ENCODE measurements at regions of chr17 and their contacts with region 1.

Region 1: DNA sequence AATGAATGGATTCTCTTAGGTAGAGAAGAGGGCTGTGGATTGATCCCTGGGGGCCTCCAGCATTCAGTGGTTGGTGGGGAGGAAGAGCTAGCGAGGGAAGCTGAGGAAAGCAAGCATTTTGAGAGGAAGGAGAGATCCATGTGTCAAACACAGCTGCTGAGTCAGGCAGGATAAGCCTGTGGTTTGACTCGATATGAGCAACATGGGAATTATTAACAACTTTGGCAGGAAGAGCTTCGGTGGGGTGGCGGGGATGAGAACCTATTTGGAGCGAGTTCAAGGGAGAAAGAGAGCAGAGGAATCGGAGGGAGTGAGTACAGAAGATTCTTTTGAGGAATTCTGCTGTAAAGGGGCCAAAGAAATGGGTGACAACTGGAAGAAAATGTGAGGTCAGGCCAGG is 59.5 kb upstream of the CDC42EP4 start:
- DNase-seq: no peak

Region 2: DNA sequence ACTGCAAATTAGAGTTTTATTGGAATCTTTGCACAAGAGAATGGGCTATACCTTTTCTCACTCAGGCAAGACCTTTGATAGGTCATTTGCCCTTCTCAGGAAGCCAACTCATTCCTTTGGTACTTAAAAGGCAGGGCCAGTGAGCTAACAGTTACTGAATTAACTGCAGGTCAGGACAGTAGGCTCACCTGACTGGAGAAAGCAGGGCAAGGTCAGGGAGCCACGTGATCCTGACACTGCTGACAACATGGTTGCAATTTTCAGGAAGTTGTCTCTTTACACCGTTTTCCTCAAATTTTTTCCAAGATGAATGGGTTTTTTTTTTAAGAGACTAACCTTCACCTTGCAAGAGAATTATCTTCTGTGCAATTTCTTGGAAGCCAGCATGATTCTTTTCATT is 130.7 kb before region 1 on chr17:
- intact Hi-C with region 1: no loop called
- DNase-seq: no peak

Region 3: DNA sequence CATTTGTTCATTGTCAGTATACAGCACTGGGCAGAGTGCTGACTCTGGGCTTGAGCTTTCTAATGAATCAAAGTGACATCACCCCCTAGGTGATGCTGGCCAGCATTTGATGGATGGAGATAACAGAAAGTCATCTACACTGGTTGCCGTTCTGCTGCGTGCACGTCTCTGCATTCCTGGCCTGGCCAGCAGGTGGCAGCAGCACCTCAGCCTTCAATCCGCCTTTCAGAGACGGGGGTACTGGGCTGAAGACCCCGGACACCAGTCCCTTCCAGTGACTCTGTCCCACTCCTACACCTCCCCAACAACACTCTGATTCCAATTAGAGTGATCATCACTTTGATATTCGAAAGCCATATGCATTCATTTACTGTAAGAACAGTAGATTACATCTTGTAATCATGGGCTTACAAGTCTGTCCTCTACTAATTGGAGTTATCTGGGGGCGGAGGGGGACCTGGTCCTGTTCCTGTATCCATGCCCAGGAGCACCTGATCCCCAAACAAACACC is 115.6 kb before region 1 on chr17:
- intact Hi-C with region 1: loop called (anchors 1 kb)
- DNase-seq: no peak

Region 4: DNA sequence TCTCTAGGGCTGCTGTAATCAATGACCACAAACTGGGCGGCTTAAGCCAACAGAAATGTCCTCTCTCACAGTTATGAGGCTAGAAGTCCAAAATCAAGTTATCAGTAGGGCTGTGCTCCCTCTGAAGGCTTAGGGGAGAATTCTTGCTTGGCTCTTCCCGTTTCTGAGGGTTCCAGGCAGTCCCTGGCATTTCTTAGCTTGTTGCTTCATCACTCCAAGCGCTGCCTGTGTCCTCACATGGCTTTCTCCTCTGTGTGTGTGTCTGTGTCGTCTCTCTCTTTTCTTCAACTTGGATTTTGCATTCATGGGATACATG is 45.8 kb before region 1 on chr17:
- intact Hi-C with region 1: no loop called
- DNase-seq: no peak

Region 5: DNA sequence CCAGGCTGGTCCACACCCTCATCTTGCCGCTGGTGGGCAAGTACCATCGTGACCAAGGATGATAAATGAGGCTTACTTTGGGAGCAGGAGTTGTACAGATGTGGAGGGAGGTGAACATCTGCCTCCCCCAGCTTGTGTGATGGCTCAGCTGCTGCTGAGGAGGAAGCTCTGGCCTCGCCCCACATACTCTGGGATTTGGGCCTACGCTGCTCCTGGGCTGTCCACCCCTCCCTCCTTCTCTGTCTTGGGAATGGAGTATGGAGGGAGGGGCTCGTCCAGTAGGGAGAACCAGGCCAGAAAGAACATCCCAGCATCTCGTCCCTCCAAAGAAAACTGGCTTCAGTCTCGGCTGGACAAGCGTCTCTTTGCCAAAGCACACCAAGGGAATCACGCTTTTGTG is 75.3 kb after region 1 on chr17:
- intact Hi-C with region 1: no loop called
- DNase-seq: no peak

Measured in cardiac septum (tissue), 1 donor.